ENCODE measurements at regions of chr5 and their contacts with region 1.

Region 1: GRCh38 chr5:128213340-128213739 is 129.8 kb downstream of the SLC12A2 start:
- DNase-seq: peak; percentile 40 to 68 (median 54)
- ATAC-seq: no peak
- H3K4me3 ChIP-seq: no peak overlapping the region
- H3K27ac ChIP-seq: no peak overlapping the region
- H3K4me1 ChIP-seq: no peaks in the 10 kb centered on the region
- H3K27me3 ChIP-seq: no peaks in the 10 kb centered on the region
- CTCF ChIP-seq: peak; percentile 38 to 84 (median 76)
- POLR2A ChIP-seq: no peak

Region 2: GRCh38 chr5:128506643-128507042 is 293.3 kb after region 1 on chr5:
- intact Hi-C with region 1: loop called (anchors 10 kb)
- DNase-seq: no peak
- ATAC-seq: no peak
- H3K4me3 ChIP-seq: no peak overlapping the region
- H3K27ac ChIP-seq: no peak overlapping the region
- H3K4me1 ChIP-seq: no peaks in the 10 kb centered on the region
- H3K27me3 ChIP-seq: no peaks in the 10 kb centered on the region
- CTCF ChIP-seq: no peak
- POLR2A ChIP-seq: no peak

Region 3: DNA sequence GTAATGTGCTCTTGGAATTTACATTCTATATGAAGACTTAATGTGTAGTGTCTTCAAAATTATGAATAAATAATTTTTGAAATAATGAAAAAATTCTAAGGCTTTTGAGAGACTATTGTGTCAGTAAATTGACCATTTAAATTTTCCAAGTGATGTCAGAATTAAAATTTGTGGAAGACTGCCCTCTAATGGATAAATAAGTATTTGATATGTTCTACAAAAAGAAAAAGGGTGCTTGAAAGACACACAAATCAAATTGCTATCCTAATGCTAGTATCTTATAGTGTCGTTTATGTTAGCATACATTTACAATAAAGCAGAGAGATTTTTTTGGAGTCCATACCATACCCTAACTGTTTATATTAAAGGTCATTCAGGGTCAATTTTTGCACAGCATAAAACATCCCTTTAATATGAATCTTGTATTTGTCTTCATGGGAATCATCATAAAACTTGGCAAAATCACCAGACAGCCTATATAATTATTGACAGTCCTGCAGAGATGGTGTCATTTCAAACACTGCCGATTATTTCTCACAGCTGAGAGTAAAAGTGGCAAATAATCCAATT is 631.1 kb after region 1 on chr5:
- intact Hi-C with region 1: loop called (anchors 5 kb)
- DNase-seq: no peak
- ATAC-seq: no peak
- H3K4me3 ChIP-seq: no peak overlapping the region
- H3K27ac ChIP-seq: no peak overlapping the region
- H3K4me1 ChIP-seq: no peaks in the 10 kb centered on the region
- H3K27me3 ChIP-seq: no peaks in the 10 kb centered on the region
- CTCF ChIP-seq: peak in 5 of 7 experiments; percentile 26 to 42 (median 29)
- POLR2A ChIP-seq: no peak

Measured in body of pancreas (tissue), 4 donors.